Ascending aorta (tissue), 2 donors: ENCODE measurements at regions of chr2 and their contacts with region 1.

Region 1: GRCh38 chr2:9494096-9494495 is 19.7 kb downstream of the IAH1 start:
- DNase-seq: no peak
- H3K4me3 ChIP-seq: no peak overlapping the region
- H3K27ac ChIP-seq: peak overlapping the region in 1 of 2 donors; percentile 5
- H3K4me1 ChIP-seq: peaks cover 0 to 12% of the 10 kb centered on the region in 2 donors
- H3K27me3 ChIP-seq: no peaks in the 10 kb centered on the region
- CTCF ChIP-seq: no peak

Region 2: GRCh38 chr2:9451231-9451630 is 42.9 kb before region 1 on chr2:
- intact Hi-C with region 1: no loop called
- DNase-seq: no peak
- H3K4me3 ChIP-seq: no peak overlapping the region
- H3K27ac ChIP-seq: no peak overlapping the region
- H3K4me1 ChIP-seq: no peaks in the 10 kb centered on the region
- H3K27me3 ChIP-seq: no peaks in the 10 kb centered on the region
- CTCF ChIP-seq: no peak

Region 3: DNA sequence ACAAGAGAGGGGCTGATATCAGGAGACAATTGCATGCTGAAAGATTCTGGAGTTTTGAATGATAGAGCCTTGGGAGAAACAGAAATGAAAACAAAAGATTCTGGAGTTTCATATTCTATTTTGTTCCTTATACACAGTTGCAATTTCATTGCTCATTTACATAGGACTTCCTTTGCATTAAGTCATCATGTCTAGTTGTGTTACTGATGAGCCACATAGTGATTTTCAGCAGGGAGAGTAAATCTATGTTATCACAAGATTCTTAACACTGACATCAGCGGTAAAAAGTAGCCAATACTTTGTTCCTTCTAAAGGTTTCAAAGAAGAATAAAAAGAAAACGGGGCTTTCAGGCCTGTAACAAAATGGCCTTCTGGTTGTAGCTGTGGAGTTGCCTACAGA is 54.4 kb after region 1 on chr2:
- intact Hi-C with region 1: loop called (anchors 5 kb)
- DNase-seq: no peak
- H3K4me3 ChIP-seq: no peak overlapping the region
- H3K27ac ChIP-seq: peak overlapping the region in 1 of 2 donors; percentile 8
- H3K4me1 ChIP-seq: peaks cover 19 to 48% of the 10 kb centered on the region in 2 donors
- H3K27me3 ChIP-seq: no peaks in the 10 kb centered on the region
- CTCF ChIP-seq: no peak